Sciatic nerve (tissue), 2 donors: ENCODE measurements at regions of chr5 and their contacts with region 1.

Region 1: DNA sequence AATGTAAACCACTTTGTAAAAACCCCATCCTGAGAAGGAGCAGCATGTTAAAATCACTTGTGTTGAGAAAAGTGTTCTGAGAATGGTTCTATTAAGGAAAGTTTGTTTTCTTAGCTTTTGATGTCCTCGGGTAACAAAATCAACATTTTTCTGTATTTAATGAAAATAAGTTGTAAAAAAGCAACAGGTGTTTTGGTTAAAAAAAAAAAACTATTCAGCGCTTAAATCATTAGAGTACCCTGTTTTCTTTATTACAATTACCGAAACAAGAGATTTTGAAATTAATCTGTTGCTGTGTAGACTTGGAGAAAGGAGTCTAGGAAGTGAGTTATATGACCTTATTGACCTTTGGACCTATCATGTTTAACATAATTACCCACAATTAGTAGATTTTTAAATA is 167.7 kb downstream of the XRCC4 start:
- DNase-seq: no peak
- ATAC-seq: no peak

Region 2: GRCh38 chr5:82785882-82786509 is 459.0 kb before region 1 on chr5:
- intact Hi-C with region 1: no loop called
- DNase-seq: no peak
- ATAC-seq: no peak

Region 3: GRCh38 chr5:83265318-83265717 is 20.3 kb after region 1 on chr5:
- intact Hi-C with region 1: loop called (anchors 1 kb)
- DNase-seq: no peak
- ATAC-seq: no peak

Region 4: GRCh38 chr5:83564069-83564749 is 319.2 kb after region 1 on chr5:
- intact Hi-C with region 1: no loop called
- DNase-seq: no peak
- ATAC-seq: peak; percentile 61

Region 5: DNA sequence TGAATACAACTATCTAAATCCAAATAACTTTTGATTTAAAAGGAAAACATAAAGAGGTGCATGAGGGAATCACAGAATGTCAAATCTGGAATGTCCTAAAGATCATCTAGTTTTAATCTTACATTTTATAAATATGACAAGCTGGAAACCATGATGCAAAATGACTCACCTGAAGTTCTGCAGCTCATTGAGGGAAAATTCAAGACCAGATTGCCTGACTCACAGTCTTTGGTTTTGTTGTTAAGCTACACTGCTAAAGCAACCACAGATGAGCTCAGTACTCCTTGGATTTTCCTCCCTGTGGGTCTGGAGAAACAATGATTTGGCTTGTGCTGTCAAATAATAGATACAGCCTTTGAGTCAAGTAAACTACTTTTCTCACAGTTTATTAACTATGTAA is 1158.7 kb after region 1 on chr5:
- intact Hi-C with region 1: no loop called
- DNase-seq: no peak
- ATAC-seq: no peak